ENCODE measurements at regions of chr2 and their contacts with region 1.

Region 1: GRCh38 chr2:208265801-208266552 is at the start of gene PIKFYVE:
- DNase-seq: peak; percentile 63 to 87 (median 83)
- ATAC-seq: peak; percentile 94
- H3K4me3 ChIP-seq: peak within 1 kb of the TSS; percentile 97
- H3K4me3 Mint-ChIP-seq: peak within 1 kb of the TSS; percentile 90 to 99 (median 96)
- H3K27ac ChIP-seq: peak within 1 kb of the TSS; percentile 83
- H3K27ac Mint-ChIP-seq: peak within 1 kb of the TSS; percentile 87 to 98 (median 95)
- H3K4me1 ChIP-seq: peaks cover 12 to 16% of the 10 kb centered on the region in 2 donors
- H3K4me1 Mint-ChIP-seq: peaks cover 9 to 60% (median 53%) of the 10 kb centered on the region in 7 donors
- H3K27me3 ChIP-seq: no peaks in the 10 kb centered on the region
- H3K27me3 Mint-ChIP-seq: peaks cover 0 to 5% (median 0%) of the 10 kb centered on the region in 5 donors
- total RNA-seq, gene PIKFYVE: 33.4 to 52.3 (median 39.1) TPM

Region 2: DNA sequence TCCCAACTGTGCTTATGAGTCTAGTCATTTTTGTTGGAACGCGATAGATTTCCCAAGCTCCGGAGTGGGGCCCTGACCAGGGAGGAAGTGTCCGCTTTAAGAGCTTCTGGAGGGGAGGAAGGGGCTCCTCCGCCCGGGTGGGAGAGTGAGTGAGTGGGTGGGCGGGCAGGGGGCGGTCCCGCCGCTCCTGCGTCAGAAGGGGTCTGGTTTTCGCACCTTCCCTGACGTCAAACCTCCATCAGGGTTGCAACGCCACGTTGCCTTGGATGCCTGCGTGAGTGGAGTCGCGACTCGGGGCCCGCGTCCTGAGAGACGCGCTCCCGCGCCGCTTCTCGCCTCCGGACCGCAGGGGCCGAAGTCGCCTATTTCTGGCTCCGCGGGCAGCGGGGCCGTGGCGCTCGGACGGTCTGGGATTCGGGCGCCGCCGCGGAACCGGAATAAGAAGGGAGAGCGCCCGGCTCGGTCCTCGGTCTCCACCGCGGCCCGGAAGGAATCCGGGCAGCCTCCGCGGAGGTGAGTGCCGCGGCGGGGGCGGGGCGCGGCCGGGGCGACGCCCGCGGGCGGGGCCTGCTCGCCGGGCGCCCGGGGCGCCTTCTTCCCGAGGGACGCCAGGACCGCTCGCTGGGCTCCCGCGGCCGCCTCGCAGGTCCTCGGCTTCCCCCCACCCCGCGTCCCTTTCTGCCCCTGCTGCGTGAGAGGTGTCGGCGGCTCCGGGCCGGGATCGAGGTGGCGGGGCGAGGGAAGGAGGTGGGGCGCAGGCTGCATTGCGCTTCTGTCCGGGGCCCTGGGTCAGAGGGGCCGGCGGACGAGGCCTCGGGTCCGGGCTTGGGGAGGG is 1991.3 kb before region 1 on chr2 and contains the start of gene ZDBF2:
- CTCF ChIA-PET with region 1: no interaction called
- POLR2A ChIA-PET with region 1: no interaction called
- intact Hi-C with region 1: loop called in 1 of 2 experiments (anchors 10 kb)
- DNase-seq: peak; percentile 29 to 70 (median 62)
- ATAC-seq: peak; percentile 80
- H3K4me3 ChIP-seq: peak within 1 kb of the TSS; percentile 56
- H3K4me3 Mint-ChIP-seq: peak within 1 kb of the TSS; percentile 85 to 94 (median 91)
- H3K27ac ChIP-seq: peak within 1 kb of the TSS; percentile 79
- H3K27ac Mint-ChIP-seq: peak within 1 kb of the TSS; percentile 85 to 96 (median 94)
- H3K4me1 ChIP-seq: peaks cover 8 to 14% of the 10 kb centered on the region in 2 donors
- H3K4me1 Mint-ChIP-seq: peaks cover 9 to 25% (median 20%) of the 10 kb centered on the region in 7 donors
- H3K27me3 ChIP-seq: peaks cover 0 to 6% of the 10 kb centered on the region in 2 donors
- H3K27me3 Mint-ChIP-seq: peaks cover 14 to 69% (median 51%) of the 10 kb centered on the region in 5 donors
- total RNA-seq, gene ZDBF2: 9.1 to 22.4 (median 16.0) TPM

Region 3: GRCh38 chr2:207769597-207770486 is 496.1 kb before region 1 on chr2 and contains the start of gene FZD5:
- CTCF ChIA-PET with region 1: no interaction called
- POLR2A ChIA-PET with region 1: no interaction called
- intact Hi-C with region 1: loop called in 1 of 2 experiments (anchors 5 kb)
- DNase-seq: peak in 8 of 9 donors; percentile 29 to 92 (median 37)
- ATAC-seq: peak; percentile 91
- H3K4me3 ChIP-seq: peak within 1 kb of the TSS; percentile 63
- H3K4me3 Mint-ChIP-seq: peak within 1 kb of the TSS; percentile 87 to 98 (median 94)
- H3K27ac ChIP-seq: no peak within 1 kb of the TSS
- H3K27ac Mint-ChIP-seq: peak within 1 kb of the TSS in 4 of 9 donors; percentile 31 to 81 (median 66)
- H3K4me1 ChIP-seq: peaks cover 20 to 24% of the 10 kb centered on the region in 2 donors
- H3K4me1 Mint-ChIP-seq: peaks cover 9 to 37% (median 29%) of the 10 kb centered on the region in 7 donors
- H3K27me3 ChIP-seq: peaks cover 0 to 3% of the 10 kb centered on the region in 2 donors
- H3K27me3 Mint-ChIP-seq: peaks cover 14 to 64% (median 23%) of the 10 kb centered on the region in 5 donors
- total RNA-seq, gene FZD5: 0.13 to 0.93 (median 0.27) TPM

Region 4: GRCh38 chr2:208175069-208175839 is 90.7 kb before region 1 on chr2:
- CTCF ChIA-PET with region 1: interaction called, 3 read pairs
- POLR2A ChIA-PET with region 1: no interaction called
- intact Hi-C with region 1: loop called (anchors 1 to 5 kb)
- DNase-seq: peak; percentile 7 to 59 (median 45)
- ATAC-seq: peak; percentile 93
- H3K4me3 ChIP-seq: no peak overlapping the region
- H3K4me3 Mint-ChIP-seq: no peak overlapping the region
- H3K27ac ChIP-seq: no peak overlapping the region
- H3K27ac Mint-ChIP-seq: no peak overlapping the region
- H3K4me1 ChIP-seq: no peaks in the 10 kb centered on the region
- H3K4me1 Mint-ChIP-seq: peaks cover 0 to 6% (median 4%) of the 10 kb centered on the region in 7 donors
- H3K27me3 ChIP-seq: no peaks in the 10 kb centered on the region
- H3K27me3 Mint-ChIP-seq: peaks cover 2 to 20% (median 11%) of the 10 kb centered on the region in 5 donors

Region 5: GRCh38 chr2:210002158-210003157 is 1736.5 kb after region 1 on chr2 and contains the start of gene RPE:
- CTCF ChIA-PET with region 1: no interaction called
- POLR2A ChIA-PET with region 1: no interaction called
- intact Hi-C with region 1: loop called (anchors 1 to 2 kb)
- DNase-seq: peak; percentile 93 to 97 (median 96)
- ATAC-seq: peak; percentile 100
- H3K4me3 ChIP-seq: peak within 1 kb of the TSS; percentile 98
- H3K4me3 Mint-ChIP-seq: peak within 1 kb of the TSS; percentile 88 to 97 (median 95)
- H3K27ac ChIP-seq: peak within 1 kb of the TSS; percentile 81
- H3K27ac Mint-ChIP-seq: peak within 1 kb of the TSS; percentile 85 to 99 (median 95)
- H3K4me1 ChIP-seq: peaks cover 20 to 34% of the 10 kb centered on the region in 2 donors
- H3K4me1 Mint-ChIP-seq: peaks cover 42 to 81% (median 64%) of the 10 kb centered on the region in 7 donors
- H3K27me3 ChIP-seq: no peaks in the 10 kb centered on the region
- H3K27me3 Mint-ChIP-seq: no peaks in the 10 kb centered on the region
- total RNA-seq, gene RPE: 15.9 to 47.3 (median 40.8) TPM

Measured in naive thymus-derived CD4-positive, alpha-beta T cell (primary cell).